PC-9 (cell line): ENCODE measurements at regions of chr2 and their contacts with region 1.

Region 1: DNA sequence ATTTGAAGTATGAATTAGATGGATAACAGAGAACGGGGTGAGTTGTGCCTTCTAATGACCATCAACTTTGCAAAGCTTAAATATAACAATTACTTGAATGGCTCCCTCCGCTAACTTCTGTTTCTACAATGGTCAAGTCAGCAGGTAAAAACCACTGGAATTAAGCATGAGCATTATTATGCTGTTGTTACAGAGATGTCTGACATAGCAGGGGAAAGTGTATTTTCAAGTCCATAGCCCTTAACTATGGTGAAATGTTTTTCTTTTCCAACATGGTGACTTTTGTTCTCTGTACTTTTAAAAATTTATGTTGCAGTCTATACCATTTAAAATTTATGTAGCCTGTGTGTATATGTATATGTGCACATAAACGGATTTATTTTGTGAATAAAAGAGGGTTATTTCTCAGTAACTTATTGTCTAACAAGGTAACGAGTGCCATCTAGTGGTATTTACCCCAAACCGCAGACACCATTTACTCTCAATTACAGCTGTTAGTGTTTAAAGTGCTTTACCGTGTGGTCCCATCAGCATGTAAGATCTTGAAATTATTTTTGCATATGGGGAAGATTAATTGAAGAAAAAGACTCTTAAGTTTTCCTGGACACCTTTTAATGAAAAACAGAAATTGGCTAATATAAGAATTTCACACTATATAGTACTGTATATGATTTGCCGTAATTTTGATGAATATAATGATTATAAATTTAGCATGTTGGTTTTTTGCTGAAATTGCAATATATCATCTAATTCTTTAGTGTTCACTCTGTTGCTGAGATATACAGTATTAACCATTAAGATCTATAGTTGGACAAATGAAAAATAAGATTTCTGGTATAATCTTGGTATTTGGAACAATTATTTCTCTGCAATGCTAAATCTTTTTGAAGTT is 78.2 kb downstream of the UBE2E3 start:
- DNase-seq: peak in 1 of 2 experiments; percentile 56
- H3K4me3 ChIP-seq: no peak overlapping the region
- H3K27ac ChIP-seq: no peak overlapping the region
- H3K4me1 ChIP-seq: no peaks in the 10 kb centered on the region
- H3K27me3 ChIP-seq: no peaks in the 10 kb centered on the region
- CTCF ChIP-seq: peak; percentile 99

Region 2: GRCh38 chr2:180240774-180241173 is 817.9 kb before region 1 on chr2:
- CTCF ChIA-PET with region 1: no interaction called
- POLR2A ChIA-PET with region 1: no interaction called
- intact Hi-C with region 1: loop called (anchors 2 kb)
- DNase-seq: peak in 1 of 2 experiments; percentile 52
- H3K4me3 ChIP-seq: no peak overlapping the region
- H3K27ac ChIP-seq: no peak overlapping the region
- H3K4me1 ChIP-seq: no peaks in the 10 kb centered on the region
- H3K27me3 ChIP-seq: no peaks in the 10 kb centered on the region
- CTCF ChIP-seq: peak; percentile 59

Region 3: DNA sequence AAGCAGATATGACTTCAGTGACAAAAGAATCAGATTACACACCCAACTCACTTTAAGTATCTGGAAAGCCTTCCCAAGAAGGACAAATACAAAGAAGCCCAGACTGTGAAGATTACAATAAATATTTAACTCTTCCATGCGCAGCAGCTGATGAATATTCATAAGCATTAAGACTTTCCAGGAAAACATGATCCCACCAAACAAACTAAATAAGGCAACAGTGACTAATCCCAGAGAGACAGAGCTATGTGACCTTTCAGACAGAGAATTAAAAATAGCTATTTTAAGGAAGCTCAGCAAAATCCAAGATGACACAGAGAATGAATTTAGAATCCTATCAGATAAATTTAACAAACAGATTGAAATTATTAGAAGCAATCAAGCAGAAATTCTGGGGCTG is 186.4 kb before region 1 on chr2:
- CTCF ChIA-PET with region 1: no interaction called
- POLR2A ChIA-PET with region 1: no interaction called
- intact Hi-C with region 1: loop called (anchors 10 kb)
- DNase-seq: no peak
- H3K4me3 ChIP-seq: peak overlapping the region; percentile 42; the same call in 1 of the 2 replicates
- H3K27ac ChIP-seq: no peak overlapping the region
- H3K4me1 ChIP-seq: no peaks in the 10 kb centered on the region
- H3K27me3 ChIP-seq: no peaks in the 10 kb centered on the region
- CTCF ChIP-seq: no peak

Region 4: DNA sequence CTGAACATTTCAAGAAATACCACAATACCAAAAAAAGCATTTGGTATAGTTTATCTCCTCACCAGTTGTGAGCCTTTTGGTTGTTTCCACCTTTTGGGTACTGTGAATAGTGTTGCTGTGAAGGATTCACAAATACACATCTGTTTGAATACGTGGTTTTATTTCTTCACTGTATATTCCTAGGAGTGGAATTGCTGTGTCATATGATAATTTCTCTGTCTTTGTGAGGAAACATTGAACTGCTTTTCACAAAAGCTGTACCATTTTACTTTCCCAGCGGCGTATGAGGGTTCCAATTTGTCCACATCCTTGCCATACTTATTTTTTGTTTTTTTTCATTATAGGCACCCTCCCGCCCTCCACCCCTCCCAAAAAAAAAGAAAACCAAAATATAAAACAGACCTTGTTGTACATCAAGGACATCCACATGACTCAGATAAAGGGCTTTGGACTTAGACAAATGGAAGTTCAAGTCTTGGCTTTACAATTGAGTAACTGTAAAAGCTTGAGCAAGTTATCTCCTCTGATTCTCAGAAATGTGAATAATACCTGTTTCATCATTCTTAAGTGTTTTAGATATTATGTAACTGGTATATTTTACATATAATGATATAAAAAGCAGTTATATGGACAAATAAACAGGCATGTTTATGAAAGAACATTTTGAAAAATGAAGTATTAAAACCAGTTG is 59.2 kb before region 1 on chr2:
- CTCF ChIA-PET with region 1: no interaction called
- POLR2A ChIA-PET with region 1: no interaction called
- intact Hi-C with region 1: no loop called
- DNase-seq: no peak
- H3K4me3 ChIP-seq: no peak overlapping the region
- H3K27ac ChIP-seq: no peak overlapping the region
- H3K4me1 ChIP-seq: no peaks in the 10 kb centered on the region
- H3K27me3 ChIP-seq: no peaks in the 10 kb centered on the region
- CTCF ChIP-seq: no peak